ENCODE measurements at regions of chr1 and their contacts with region 1.

Region 1: DNA sequence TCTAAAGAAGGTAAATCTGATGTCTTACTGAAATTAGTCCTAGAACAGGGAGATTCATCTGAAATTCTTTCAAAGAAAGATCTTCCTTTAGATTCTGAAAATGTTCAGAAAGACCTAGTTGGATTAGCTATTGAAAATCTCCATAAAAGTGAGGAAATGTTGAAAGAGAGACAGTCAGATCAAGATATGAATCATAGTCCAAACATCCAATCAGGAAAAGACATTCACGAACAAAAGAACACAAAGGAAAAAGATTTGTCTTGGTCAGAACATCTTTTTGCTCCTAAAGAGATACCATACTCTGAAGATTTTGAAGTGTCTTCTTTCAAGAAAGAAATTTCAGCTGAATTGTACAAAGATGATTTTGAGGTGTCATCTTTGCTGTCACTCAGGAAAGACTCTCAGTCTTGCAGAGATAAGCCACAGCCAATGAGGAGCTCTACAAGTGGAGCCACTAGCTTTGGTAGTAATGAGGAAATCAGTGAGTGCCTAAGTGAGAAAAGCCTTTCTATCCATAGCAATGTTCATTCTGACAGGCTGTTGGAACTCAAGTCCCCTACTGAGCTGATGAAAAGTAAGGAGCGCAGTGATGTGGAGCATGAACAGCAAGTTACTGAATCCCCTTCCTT is 61.6 kb upstream of the QSOX1 start:
- DNase-seq: no peak
- H3K4me3 ChIP-seq: no peak overlapping the region
- H3K27ac ChIP-seq: no peak overlapping the region
- H3K27me3 ChIP-seq: no peaks in the 10 kb centered on the region
- CTCF ChIP-seq: no peak

Region 2: GRCh38 chr1:179910934-179911333 is 182.1 kb before region 1 on chr1:
- CTCF ChIA-PET with region 1: no interaction called
- POLR2A ChIA-PET with region 1: interaction called, 11 read pairs
- DNase-seq: no peak
- H3K4me3 ChIP-seq: no peak overlapping the region
- H3K27ac ChIP-seq: no peak overlapping the region
- H3K27me3 ChIP-seq: no peaks in the 10 kb centered on the region
- CTCF ChIP-seq: no peak

Region 3: GRCh38 chr1:180057883-180058396 is 35.1 kb before region 1 on chr1:
- CTCF ChIA-PET with region 1: no interaction called
- POLR2A ChIA-PET with region 1: no interaction called
- DNase-seq: no peak
- H3K4me3 ChIP-seq: no peak overlapping the region
- H3K27ac ChIP-seq: no peak overlapping the region
- H3K27me3 ChIP-seq: no peaks in the 10 kb centered on the region
- CTCF ChIP-seq: no peak